AG04450 (cell line): ENCODE measurements at regions of chr13 and their contacts with region 1.

Region 1: DNA sequence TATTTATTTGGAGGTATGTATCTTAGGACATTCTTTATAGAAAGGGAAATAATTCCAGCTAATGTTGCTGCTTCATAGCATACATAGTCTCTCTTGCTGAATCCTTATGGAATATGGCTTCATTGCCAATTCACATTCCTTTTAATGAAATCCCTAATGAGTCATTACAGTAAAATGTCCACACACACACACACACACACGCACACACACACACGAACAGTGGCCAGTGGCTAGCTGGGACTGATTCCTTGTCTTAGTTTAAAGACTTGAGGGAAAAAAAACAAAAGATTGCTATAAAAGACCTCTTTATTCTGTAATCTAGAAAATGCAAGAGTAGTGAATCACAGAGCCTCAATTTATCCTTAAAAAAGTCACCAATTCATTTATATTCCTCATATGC is 301.6 kb downstream of the SLITRK6 start:
- DNase-seq: peak; percentile 93
- H3K4me3 ChIP-seq: no peak overlapping the region
- H3K27ac ChIP-seq: peak overlapping the region; percentile 53
- H3K27me3 ChIP-seq: no peaks in the 10 kb centered on the region
- CTCF ChIP-seq: no peak

Region 2: GRCh38 chr13:85528491-85529215 is 31.0 kb after region 1 on chr13:
- CTCF ChIA-PET with region 1: no interaction called
- POLR2A ChIA-PET with region 1: interaction called, 10 read pairs
- DNase-seq: peak; percentile 65
- H3K4me3 ChIP-seq: peak overlapping the region; percentile 5; the same call in 1 of the 2 replicates
- H3K27ac ChIP-seq: peak overlapping the region; percentile 48
- H3K27me3 ChIP-seq: no peaks in the 10 kb centered on the region
- CTCF ChIP-seq: no peak

Region 3: DNA sequence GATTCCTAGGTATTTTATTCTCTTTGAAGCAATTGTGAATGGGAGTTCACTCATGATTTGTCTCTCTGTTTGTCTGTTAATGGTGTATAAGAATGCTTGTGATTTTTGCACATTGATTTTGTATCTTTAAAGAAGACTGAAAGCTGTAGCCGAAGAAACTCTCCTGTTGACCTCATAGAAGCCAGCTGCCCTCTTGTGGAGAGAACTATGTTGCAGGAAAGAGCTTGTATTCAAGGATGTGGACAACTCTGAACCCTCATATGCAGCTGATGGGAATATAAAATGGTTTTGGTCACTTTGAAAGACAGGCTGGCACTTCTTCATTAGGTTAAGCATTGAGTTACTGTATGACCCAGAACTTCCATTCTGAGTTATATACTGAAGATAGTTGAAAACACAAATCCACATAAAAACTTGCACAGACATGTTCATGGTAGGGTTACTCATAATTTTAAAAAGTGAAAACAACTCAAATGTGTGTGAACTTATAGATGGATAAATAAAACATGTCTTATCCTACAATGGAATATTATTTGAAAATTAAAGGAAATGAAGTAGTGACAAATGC is 367.4 kb after region 1 on chr13:
- CTCF ChIA-PET with region 1: no interaction called
- POLR2A ChIA-PET with region 1: no interaction called
- DNase-seq: peak; percentile 3
- H3K4me3 ChIP-seq: no peak overlapping the region
- H3K27ac ChIP-seq: no peak overlapping the region
- H3K27me3 ChIP-seq: no peaks in the 10 kb centered on the region
- CTCF ChIP-seq: peak; percentile 69